ENCODE measurements at regions of chr6 and their contacts with region 1.

Region 1: GRCh38 chr6:27479319-27480182 is 6.6 kb upstream of the ZNF184 start:
- DNase-seq: peak; percentile 82
- H3K4me3 Mint-ChIP-seq: no peak overlapping the region
- H3K27ac Mint-ChIP-seq: no peak overlapping the region
- H3K4me1 Mint-ChIP-seq: peaks cover 3% of the 10 kb centered on the region
- H3K27me3 Mint-ChIP-seq: peaks cover 12% of the 10 kb centered on the region

Region 2: DNA sequence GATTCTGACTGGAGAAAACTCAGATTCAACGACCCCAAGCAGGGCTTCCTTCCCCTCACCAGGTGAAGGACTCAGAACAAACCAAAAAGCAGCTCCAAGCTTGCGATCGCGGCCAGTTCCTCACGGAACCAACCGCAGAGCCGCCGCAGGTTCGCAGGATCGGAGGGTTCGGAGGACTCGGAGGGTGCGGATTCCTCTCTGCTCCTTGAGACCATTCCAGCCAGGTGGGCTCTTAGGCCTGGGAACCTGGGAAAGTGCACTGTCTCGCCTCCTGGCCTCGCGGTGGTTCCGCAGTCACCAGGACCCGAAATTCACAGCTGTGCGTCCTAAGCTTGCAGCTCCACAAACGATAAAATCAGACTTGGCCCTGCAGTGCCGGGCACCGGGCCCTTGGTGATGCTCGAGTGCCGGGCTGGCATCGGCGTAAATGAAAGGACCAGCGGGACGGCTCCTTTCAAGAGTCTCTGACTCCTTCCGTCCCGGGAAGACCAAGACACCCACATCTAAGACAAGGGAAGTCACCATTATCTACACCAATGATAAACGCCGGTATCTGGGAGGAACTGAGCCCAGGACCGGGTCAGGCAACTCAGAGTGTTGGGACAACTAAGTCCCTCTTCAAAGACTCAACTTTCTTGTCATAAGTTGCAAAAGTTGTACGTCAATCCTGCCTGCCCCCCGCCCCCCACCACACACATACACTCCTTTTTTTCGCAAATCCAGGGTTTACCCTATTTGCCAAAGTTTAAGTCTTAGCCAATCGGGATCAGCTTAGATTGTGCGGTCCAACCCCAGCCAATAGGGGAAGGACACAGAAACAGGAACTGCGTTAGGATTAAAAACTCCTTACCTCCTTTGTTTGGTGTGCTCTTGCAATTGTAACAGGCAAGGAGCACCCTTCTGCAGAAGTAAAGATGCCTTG is 301.8 kb before region 1 on chr6:
- intact Hi-C with region 1: loop called (anchors 2 kb)
- DNase-seq: peak; percentile 65
- H3K4me3 Mint-ChIP-seq: peak overlapping the region; percentile 90
- H3K27ac Mint-ChIP-seq: peak overlapping the region; percentile 87
- H3K4me1 Mint-ChIP-seq: peaks cover 11% of the 10 kb centered on the region
- H3K27me3 Mint-ChIP-seq: peaks cover 37% of the 10 kb centered on the region

Region 3: DNA sequence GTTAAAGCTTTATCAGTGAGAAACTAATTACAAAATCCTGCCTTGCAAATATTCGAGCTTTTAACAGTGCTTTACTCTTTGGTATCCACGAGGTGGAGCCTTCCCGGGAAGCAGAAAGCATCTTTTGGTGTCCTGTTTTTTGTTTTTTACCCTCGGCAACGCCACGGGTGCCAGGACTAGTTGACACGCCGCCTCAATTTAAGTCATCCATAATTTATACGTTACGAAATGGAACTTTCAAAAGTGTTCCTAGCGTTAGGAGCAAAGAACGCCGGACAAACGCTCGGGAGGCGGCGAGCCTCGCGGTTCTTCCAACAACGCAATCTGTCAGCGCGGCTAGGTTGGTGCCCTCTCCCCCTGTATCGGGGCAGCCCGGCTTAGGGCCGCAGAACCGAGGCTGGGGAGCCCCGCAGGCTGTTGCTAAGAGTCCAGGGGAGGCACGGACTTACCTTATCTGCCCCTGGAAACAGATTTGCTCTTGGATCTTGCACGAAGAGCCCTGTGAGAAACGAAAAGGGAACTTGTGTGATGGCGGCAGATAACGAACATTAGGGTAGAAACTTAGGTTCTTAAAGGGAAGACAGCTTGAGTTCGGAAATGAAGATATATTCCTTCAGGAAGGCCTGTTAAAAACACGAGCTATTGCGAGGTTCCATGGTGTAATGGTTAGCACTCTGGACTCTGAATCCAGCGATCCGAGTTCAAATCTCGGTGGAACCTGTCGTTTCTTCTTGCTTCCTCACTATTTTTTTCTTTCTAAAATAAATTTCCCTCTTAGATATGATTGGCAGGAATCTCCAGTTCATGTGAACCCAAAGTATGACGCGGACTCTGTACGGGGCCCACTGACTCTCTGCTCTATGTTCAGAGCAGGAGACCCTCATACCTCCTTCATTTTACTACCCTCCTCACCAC is 39.6 kb after region 1 on chr6:
- intact Hi-C with region 1: loop called (anchors 1 kb)
- DNase-seq: peak; percentile 30
- H3K4me3 Mint-ChIP-seq: peak overlapping the region; percentile 79
- H3K27ac Mint-ChIP-seq: peak overlapping the region; percentile 62
- H3K4me1 Mint-ChIP-seq: peaks cover 11% of the 10 kb centered on the region
- H3K27me3 Mint-ChIP-seq: peaks cover 30% of the 10 kb centered on the region

Region 4: DNA sequence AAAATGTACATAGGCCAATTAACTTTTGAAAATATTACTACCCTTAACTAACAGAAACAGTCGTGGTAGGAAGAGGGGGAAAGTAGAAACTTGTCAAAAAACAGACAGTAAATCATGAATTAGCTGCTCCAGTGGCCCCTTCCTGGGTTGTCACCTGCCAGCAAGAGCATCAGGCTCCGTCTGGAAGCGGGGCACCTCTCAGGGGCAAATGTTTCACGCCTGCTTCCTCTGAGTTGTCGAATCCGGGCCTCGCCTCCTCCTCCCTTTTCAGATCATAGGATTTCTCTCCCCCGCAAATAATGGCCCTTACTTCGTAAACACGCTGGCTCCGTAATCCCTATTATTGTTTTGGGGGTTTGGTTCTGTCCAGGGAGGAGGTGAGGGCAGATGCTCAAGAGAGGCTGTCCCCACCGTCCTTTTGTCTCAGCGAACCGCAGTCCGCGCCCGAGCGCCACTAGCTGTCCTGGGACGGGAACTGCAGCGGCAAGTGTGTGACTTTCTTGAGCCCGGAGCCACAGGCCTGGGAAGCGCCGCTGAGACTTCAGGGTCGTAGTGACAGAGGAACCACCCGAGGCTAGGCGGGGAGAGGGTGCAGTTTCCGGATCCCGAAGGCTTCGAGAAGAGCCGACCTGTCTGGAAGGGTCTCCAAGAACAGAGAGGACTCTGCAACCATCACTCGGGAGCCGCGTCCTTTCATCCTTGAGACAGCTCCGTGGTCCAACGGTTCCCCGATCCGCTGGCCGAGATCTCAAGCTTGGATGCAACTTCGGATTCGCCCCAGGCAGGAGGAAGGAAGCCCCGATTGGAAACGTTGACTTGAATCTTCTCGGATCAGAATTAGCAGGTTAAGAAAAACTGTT is 207.8 kb after region 1 on chr6:
- intact Hi-C with region 1: loop called (anchors 5 kb)
- DNase-seq: peak; percentile 73
- H3K4me3 Mint-ChIP-seq: peak overlapping the region; percentile 88
- H3K27ac Mint-ChIP-seq: peak overlapping the region; percentile 68
- H3K4me1 Mint-ChIP-seq: peaks cover 16% of the 10 kb centered on the region
- H3K27me3 Mint-ChIP-seq: peaks cover 17% of the 10 kb centered on the region

Region 5: GRCh38 chr6:27902335-27903314 is 423.1 kb after region 1 on chr6:
- intact Hi-C with region 1: loop called (anchors 5 kb)
- DNase-seq: peak; percentile 78
- H3K4me3 Mint-ChIP-seq: peak overlapping the region; percentile 82
- H3K27ac Mint-ChIP-seq: peak overlapping the region; percentile 90
- H3K4me1 Mint-ChIP-seq: peaks cover 22% of the 10 kb centered on the region
- H3K27me3 Mint-ChIP-seq: peaks cover 13% of the 10 kb centered on the region